ENCODE measurements at regions of chr1 and their contacts with region 1.

Region 1: DNA sequence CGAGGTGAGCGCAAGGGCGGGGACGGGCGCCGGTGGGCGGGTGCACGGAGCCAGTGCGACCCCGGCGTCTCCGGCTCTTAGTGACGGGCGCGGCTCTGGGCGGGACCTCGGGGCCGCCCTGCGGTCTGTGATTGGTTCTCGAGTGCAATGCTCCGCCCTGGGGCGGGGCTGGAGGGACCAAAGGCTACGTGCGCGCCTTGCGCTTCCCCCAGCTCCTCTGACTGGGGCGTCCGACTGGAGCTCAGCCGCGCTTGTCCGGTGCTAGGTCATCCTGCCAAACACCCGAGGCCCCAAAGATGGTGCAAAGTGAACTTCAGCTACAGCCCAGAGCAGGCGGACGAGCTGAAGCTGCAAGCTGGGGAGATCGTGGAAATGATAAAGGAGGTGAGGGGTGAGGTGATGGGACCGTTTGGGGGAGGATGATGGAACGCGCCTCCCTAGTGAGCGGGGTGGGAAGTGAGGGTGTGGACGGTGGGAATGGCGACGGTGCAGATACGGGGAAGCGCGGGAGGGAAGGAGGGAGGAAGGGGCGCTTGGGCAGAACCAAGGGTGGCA is 811 bp downstream of the SH3D21 start:
- DNase-seq: peak; percentile 86 to 95 (median 90)
- H3K4me3 ChIP-seq: peak overlapping the region in 3 of 4 donors; percentile 40 to 75 (median 74)
- H3K27ac ChIP-seq: peak overlapping the region in 3 of 5 donors; percentile 67 to 81 (median 79)
- H3K4me1 ChIP-seq: peaks cover 7 to 17% of the 10 kb centered on the region in 2 donors
- H3K27me3 ChIP-seq: no peaks in the 10 kb centered on the region
- CTCF ChIP-seq: no peak
- POLR2A ChIP-seq: peak in 1 of 2 donors; percentile 60

Region 2: GRCh38 chr1:36248250-36248894 is 58.6 kb before region 1 on chr1:
- intact Hi-C with region 1: no loop called
- DNase-seq: peak; percentile 72 to 95 (median 89)
- H3K4me3 ChIP-seq: no peak overlapping the region
- H3K27ac ChIP-seq: peak overlapping the region; percentile 39 to 78 (median 68)
- H3K4me1 ChIP-seq: peaks cover 36 to 68% of the 10 kb centered on the region in 2 donors
- H3K27me3 ChIP-seq: no peaks in the 10 kb centered on the region
- CTCF ChIP-seq: no peak
- POLR2A ChIP-seq: no peak

Region 3: GRCh38 chr1:36342481-36343478 is 35.8 kb after region 1 on chr1:
- intact Hi-C with region 1: no loop called
- DNase-seq: peak; percentile 55 to 80 (median 68)
- H3K4me3 ChIP-seq: no peak overlapping the region
- H3K27ac ChIP-seq: peak overlapping the region in 3 of 5 donors; percentile 23 to 65 (median 64)
- H3K4me1 ChIP-seq: peaks cover 19 to 24% of the 10 kb centered on the region in 2 donors
- H3K27me3 ChIP-seq: no peaks in the 10 kb centered on the region
- CTCF ChIP-seq: peak; percentile 26 to 74 (median 69)
- POLR2A ChIP-seq: no peak

Region 4: DNA sequence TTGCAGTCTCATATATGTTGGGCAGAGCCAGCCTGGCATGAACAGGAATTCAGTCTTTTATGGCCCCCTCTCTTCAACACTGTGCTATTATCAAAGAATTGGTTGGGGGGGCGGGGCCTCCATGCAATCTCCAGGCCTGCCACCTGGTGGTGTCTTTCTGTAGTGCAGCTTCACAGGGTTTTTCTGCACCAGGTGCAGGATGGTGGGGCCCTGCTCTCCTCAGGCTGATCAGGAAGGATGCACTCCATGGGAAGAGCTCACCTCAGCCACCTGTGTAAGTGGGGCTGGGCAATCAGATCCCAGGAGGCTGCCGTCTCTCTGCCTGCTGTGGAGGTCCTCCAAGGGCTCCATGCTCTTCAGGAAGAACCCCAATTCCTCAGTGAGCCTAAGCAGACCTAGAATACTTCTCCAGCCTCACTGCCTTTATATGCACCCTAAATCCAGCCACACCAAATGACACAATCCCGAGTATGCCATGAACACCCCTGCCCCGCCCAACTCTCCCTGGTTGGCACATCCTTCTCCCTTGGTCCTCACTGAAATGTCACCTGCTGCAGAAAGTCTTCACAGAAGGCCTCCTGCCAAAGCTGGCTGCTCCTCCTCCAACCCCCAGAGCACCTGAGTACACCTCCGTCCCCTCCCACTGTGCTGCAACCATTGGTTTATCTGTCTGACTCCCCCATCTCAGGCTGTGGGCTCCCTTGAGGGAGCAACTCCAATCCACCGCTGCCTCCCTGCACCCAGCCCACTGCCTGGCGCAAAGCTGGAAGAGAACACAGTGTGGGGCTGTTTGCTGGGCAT is 62.3 kb after region 1 on chr1:
- intact Hi-C with region 1: loop called in 1 of 2 experiments (anchors 10 kb)
- DNase-seq: peak; percentile 62 to 92 (median 80)
- H3K4me3 ChIP-seq: no peak overlapping the region
- H3K27ac ChIP-seq: no peak overlapping the region
- H3K4me1 ChIP-seq: peaks cover 18 to 42% of the 10 kb centered on the region in 2 donors
- H3K27me3 ChIP-seq: no peaks in the 10 kb centered on the region
- CTCF ChIP-seq: peak; percentile 83 to 94 (median 92)
- POLR2A ChIP-seq: no peak

Region 5: DNA sequence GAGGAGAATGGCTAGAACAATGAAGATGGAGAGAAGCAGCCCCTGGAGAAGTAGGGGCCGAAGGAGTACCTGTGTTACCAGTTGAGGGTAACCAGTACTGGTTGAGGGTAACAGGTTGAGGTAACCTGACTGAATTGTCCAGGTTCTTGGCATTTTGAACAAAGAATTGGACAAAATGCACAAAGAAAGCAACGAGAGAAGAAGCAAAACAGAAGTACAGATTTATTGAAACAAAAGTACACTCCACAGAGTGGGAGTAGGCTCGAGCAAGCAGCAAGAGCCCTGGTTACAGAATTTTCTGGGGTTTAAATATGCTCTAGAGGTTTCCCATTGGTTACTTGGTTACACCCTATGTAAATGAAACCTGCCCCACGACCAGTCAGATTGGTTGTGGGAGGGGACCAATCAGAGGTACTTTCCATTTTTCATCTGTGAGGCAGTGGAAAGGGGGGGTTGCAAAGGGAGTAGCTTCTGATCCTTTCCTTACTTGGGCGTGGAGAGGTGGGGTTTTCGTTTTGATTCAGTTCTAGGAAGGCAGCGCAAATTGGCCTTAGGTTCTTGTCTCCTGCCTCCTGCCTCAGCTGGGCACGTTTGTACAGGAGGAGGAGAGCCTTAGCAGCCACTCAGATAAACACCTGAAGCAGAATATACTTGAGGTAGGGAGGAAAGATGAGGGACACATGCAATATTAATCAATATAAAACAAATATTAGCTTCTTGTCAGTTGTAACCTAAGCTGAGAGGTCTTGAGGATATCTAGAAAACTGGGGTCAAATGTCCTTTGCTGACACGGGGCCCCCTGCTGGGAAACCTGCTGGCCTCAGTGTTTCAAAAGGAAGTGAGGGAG is 104.9 kb after region 1 on chr1:
- intact Hi-C with region 1: loop called in 1 of 2 experiments (anchors 10 kb)
- DNase-seq: no peak
- H3K4me3 ChIP-seq: no peak overlapping the region
- H3K27ac ChIP-seq: no peak overlapping the region
- H3K4me1 ChIP-seq: no peaks in the 10 kb centered on the region
- H3K27me3 ChIP-seq: no peaks in the 10 kb centered on the region
- CTCF ChIP-seq: no peak
- POLR2A ChIP-seq: no peak

Region 6: DNA sequence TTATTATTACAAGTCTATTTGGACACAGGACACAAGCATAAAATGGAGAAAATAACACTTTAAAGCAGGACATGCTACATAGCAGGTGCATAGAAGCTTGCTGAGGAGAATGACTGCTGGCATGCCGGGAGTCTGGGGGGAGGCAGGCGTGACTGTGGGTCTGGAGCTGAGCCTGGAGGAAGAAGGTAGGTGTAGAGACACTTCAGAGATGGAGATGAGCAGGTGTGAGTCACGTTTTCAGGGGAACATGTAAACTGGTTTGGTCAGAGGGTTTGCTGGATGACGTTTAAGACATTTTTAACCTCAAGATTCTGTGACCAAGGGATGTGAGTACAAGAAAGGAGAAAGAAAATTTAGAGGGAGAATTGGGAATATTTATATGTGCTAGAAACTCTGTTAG is 118.8 kb after region 1 on chr1:
- intact Hi-C with region 1: no loop called
- DNase-seq: no peak
- H3K4me3 ChIP-seq: no peak overlapping the region
- H3K27ac ChIP-seq: no peak overlapping the region
- H3K4me1 ChIP-seq: no peaks in the 10 kb centered on the region
- H3K27me3 ChIP-seq: no peaks in the 10 kb centered on the region
- CTCF ChIP-seq: no peak
- POLR2A ChIP-seq: no peak